ENCODE measurements at regions of chr3 and their contacts with region 1.

Region 1: DNA sequence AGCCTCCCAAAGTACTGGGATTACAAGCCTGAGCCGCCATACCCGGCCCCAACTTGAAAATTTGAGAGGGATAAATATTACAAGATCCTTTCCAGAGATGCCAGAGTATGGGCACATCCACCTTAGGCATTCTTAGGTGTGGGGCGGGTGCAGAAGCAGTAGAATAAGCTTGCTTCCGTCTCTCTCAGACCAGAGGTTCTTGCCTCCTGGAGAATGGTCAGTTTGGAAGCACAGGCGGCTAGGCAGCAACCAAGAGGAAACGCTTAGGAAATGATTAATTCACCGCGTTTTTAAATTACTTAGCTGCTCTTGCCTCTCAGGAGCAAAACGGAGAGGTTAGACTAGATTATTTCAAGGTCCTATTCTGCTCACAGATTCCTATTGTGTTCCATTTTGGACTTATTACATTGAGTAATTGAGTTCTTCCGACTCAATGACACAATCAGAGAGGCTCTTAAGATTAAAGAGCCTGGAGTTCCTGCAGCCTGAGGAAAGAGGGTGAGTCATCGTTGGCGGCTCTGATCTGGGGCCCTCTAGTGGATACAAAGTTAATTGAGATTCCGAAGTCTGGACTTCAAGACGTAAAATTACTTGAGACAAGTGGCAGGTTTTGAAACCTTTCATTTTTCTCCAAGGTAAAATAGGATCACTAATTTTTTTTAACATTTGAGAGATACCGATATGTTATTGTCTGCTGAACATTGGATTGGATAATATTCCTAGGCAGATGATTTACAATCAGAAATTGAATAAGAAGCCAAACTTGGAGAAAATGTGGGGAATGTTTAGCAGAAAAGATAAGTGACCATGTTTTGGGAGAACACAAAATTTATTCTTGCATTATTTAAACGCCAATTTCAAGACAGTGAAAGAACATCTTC is 5.8 kb upstream of the TOPAZ1 start:
- DNase-seq: no peak
- ATAC-seq: peak; percentile 66
- H3K4me3 Mint-ChIP-seq: no peak overlapping the region
- H3K27ac Mint-ChIP-seq: no peak overlapping the region
- H3K4me1 Mint-ChIP-seq: peaks cover 4% of the 10 kb centered on the region
- H3K27me3 Mint-ChIP-seq: peaks cover 10% of the 10 kb centered on the region
- CTCF ChIP-seq: peak; percentile 64

Region 2: GRCh38 chr3:43855674-43856299 is 380.1 kb before region 1 on chr3:
- CTCF ChIA-PET with region 1: no interaction called
- POLR2A ChIA-PET with region 1: no interaction called
- intact Hi-C with region 1: loop called (anchors 1 kb)
- DNase-seq: no peak
- ATAC-seq: peak; percentile 71
- H3K4me3 Mint-ChIP-seq: no peak overlapping the region
- H3K27ac Mint-ChIP-seq: no peak overlapping the region
- H3K4me1 Mint-ChIP-seq: peaks cover 4% of the 10 kb centered on the region
- H3K27me3 Mint-ChIP-seq: peaks cover 63% of the 10 kb centered on the region
- CTCF ChIP-seq: no peak

Region 3: GRCh38 chr3:44264146-44264545 is 28.3 kb after region 1 on chr3:
- CTCF ChIA-PET with region 1: no interaction called
- POLR2A ChIA-PET with region 1: no interaction called
- intact Hi-C with region 1: no loop called
- DNase-seq: no peak
- ATAC-seq: no peak
- H3K4me3 Mint-ChIP-seq: no peak overlapping the region
- H3K27ac Mint-ChIP-seq: no peak overlapping the region
- H3K4me1 Mint-ChIP-seq: no peaks in the 10 kb centered on the region
- H3K27me3 Mint-ChIP-seq: peaks cover 9% of the 10 kb centered on the region
- CTCF ChIP-seq: no peak

Region 4: DNA sequence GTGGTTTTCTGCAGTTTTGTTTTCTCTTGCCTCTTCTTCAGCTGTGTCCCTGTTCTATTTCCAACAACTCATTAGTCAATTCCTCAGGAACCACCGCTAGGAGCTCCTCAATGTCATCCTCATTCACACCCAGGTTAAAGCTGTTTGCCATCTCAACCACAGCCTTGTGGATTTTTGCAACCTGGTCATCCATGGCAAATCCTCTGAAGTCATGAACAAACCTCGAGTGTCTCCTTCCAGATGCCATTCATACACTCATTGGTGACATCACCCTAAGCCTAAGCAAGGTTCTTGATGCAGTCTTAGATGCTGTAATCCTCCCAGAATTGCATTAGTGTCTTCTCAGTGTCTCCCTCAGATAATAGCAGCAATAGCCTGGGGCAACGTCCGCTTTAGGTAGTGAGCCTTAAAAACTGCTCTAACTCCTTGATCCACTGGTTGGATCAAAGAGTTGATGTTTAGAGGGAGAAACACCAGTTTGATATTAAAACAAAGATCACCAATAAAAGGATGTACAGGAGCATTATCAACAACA is 445.1 kb after region 1 on chr3:
- CTCF ChIA-PET with region 1: no interaction called
- POLR2A ChIA-PET with region 1: no interaction called
- intact Hi-C with region 1: no loop called
- DNase-seq: no peak
- ATAC-seq: no peak
- H3K4me3 Mint-ChIP-seq: no peak overlapping the region
- H3K27ac Mint-ChIP-seq: no peak overlapping the region
- H3K4me1 Mint-ChIP-seq: peaks cover 19% of the 10 kb centered on the region
- H3K27me3 Mint-ChIP-seq: no peaks in the 10 kb centered on the region
- CTCF ChIP-seq: no peak

Measured in activated B cell treated with CpG ODN at 0.5 μM for 24 hours (primary cell).